ENCODE measurements at regions of chr19 and their contacts with region 1.

Region 1: DNA sequence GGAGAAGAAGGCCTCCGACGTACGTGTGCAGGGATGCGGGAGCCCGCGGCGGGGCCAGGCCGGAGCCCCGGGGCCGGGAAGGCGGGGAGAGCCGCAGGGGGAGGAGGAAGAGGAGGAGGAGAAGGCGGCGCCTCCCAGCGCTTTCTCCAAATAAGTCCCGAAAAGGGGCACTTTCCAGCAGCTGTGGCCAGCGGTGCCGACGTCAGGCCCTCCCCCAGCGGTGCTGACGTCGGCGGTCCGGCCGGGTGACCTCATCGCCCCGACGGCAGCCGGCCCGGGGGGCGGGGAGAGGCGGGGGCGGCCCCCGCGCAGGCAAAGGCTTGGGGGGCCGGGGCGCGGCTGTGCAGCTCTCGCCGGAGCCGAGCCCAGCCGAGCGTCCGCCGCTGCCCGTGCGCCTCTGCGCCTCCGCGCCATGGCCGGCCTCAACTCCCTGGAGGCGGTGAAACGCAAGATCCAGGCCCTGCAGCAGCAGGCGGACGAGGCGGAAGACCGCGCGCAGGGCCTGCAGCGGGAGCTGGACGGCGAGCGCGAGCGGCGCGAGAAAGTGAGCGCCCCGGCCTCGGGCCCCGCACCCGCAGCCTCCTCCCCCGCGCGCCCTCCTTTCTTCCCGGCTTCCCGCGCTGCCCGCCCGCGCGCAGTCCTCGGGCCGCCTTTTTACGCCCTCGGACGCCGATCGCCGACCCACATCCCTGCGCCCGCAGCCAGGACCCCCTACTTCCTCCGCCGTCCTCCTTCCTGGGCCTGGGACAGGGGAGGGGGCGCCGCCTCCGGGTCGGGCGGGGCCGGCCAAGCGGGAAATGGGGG is at the start of gene TPM4:
- DNase-seq: peak; percentile 93
- ATAC-seq: peak; percentile 53
- H3K4me3 Mint-ChIP-seq: peak within 1 kb of the TSS; percentile 78
- H3K27ac Mint-ChIP-seq: peak within 1 kb of the TSS; percentile 100
- H3K4me1 Mint-ChIP-seq: peaks cover 59% of the 10 kb centered on the region
- H3K27me3 Mint-ChIP-seq: no peaks in the 10 kb centered on the region
- CTCF ChIP-seq: no peak
- total RNA-seq, gene TPM4: 230 to 232 TPM

Region 2: DNA sequence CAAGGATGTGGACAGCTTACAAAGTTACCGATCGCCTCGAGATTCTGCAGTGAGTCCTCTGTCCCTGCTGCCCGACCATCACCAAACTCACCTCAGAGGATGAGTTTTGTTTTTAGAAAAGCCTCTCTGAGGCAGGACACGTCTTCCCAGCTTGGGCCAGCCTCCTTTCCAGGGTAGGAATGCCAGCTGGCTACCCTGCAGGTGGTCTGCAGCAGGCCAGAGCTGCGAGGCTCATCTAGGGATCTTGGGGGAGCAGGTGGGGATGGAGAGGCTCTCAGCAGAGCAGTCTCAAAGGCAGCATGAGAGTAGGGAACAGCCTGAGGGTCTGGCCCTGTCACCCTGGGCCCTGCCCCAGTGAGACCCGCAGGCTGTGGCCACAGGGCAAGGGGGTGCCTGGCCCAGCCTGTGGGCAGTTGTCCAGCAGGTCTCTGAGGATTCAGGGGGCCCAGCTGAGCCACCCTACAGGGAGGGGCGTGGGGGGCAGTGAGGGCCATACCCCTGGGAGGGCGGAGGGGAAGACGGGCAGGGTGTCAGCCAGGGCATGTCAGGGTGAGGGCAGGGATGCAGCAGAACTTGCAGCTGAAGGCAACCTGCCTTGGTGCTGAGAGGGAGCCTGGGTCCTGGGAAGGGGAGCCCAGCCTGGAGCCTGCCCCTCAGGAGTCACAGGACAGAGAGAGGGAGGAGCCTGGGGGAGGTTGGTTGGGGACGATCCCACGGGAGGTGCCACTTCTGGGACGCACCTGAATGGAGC is 57.4 kb before region 1 on chr19:
- CTCF ChIA-PET with region 1: no interaction called
- POLR2A ChIA-PET with region 1: no interaction called
- intact Hi-C with region 1: no loop called
- DNase-seq: no peak
- ATAC-seq: no peak
- H3K4me3 Mint-ChIP-seq: no peak overlapping the region
- H3K27ac Mint-ChIP-seq: no peak overlapping the region
- H3K4me1 Mint-ChIP-seq: no peaks in the 10 kb centered on the region
- H3K27me3 Mint-ChIP-seq: no peaks in the 10 kb centered on the region
- CTCF ChIP-seq: no peak

Region 3: DNA sequence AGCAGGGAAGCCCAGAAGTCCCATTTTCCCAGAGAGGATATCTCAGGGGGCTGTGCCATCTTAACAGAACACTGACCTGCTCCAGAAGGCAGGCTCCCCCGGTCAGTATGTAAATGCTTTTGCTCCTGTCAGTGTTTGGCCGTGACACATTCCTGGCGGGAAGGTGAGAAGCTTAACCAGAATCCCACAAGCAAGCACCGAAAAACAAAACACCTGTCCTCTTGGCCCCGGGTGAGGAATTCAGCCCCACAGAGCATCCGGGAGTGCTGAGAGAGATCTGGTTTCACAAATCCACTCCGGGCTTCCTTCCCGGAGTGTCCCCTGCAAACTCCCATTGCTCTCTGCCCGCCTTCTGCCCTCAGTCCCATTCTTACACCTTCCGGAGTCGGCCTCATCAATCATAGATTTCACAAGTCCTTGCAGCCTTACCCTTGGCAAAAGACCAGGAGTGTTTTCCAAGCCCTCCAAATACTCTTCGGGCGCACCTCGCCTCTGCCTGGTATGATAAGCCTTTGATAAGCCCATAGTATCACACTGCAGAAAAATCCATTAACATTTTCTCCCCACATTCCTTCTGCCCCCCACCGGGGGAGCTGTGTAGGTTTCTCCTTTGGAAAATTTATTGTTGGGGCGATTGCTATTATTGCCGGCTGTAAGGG is 12.1 kb after region 1 on chr19:
- CTCF ChIA-PET with region 1: interaction called, 12 read pairs
- POLR2A ChIA-PET with region 1: interaction called, 33 read pairs
- intact Hi-C with region 1: no loop called
- DNase-seq: no peak
- ATAC-seq: no peak
- H3K4me3 Mint-ChIP-seq: no peak overlapping the region
- H3K27ac Mint-ChIP-seq: no peak overlapping the region
- H3K4me1 Mint-ChIP-seq: peaks cover 32% of the 10 kb centered on the region
- H3K27me3 Mint-ChIP-seq: no peaks in the 10 kb centered on the region
- CTCF ChIP-seq: no peak

Region 4: DNA sequence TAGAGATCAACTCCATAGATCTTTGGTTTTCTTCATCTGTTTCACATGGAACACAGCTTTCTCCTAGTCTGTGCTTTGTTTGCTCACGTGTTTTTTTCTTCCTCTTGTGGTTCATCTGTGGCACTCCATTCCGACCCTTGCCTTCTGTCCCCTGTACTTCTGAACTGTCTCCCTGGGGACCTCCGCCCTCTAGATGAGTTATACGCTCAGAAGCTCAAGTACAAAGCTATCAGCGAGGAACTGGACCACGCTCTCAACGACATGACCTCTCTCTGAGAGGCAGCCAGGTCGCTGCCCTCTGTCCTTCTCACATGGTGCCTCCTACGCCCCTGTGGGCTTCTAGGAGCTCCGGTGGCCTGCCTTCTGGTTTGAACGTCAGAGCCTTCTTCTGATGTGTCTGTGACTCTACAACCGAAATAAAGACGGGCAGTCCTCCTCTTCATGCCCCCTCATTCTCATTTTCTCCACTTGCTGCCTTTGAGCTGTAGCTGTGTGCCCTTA is 18.8 kb after region 1 on chr19:
- CTCF ChIA-PET with region 1: interaction called, 6 read pairs
- POLR2A ChIA-PET with region 1: interaction called, 53 read pairs
- intact Hi-C with region 1: no loop called
- DNase-seq: peak; percentile 77
- ATAC-seq: peak; percentile 85
- H3K4me3 Mint-ChIP-seq: peak overlapping the region; percentile 44
- H3K27ac Mint-ChIP-seq: peak overlapping the region; percentile 95
- H3K4me1 Mint-ChIP-seq: peaks cover 29% of the 10 kb centered on the region
- H3K27me3 Mint-ChIP-seq: no peaks in the 10 kb centered on the region
- CTCF ChIP-seq: no peak

Region 5: GRCh38 chr19:16111160-16111908 is 35.0 kb after region 1 on chr19 and contains the start of gene RAB8A:
- CTCF ChIA-PET with region 1: interaction called, 31 read pairs
- POLR2A ChIA-PET with region 1: interaction called, 32 read pairs
- intact Hi-C with region 1: loop called (anchors 5 kb)
- DNase-seq: peak; percentile 99
- ATAC-seq: peak; percentile 93
- H3K4me3 Mint-ChIP-seq: peak within 1 kb of the TSS; percentile 95
- H3K27ac Mint-ChIP-seq: peak within 1 kb of the TSS; percentile 98
- H3K4me1 Mint-ChIP-seq: peaks cover 35% of the 10 kb centered on the region
- H3K27me3 Mint-ChIP-seq: no peaks in the 10 kb centered on the region
- CTCF ChIP-seq: peak; percentile 92
- total RNA-seq, gene RAB8A: 123 to 128 TPM